ENCODE measurements at regions of chr1 and their contacts with region 1.

Region 1: GRCh38 chr1:197339106-197340060 is 71.3 kb downstream of the CRB1 start:
- DNase-seq: no peak
- H3K4me3 Mint-ChIP-seq: no peak overlapping the region
- H3K27ac Mint-ChIP-seq: no peak overlapping the region
- H3K4me1 Mint-ChIP-seq: peaks cover 7% of the 10 kb centered on the region
- H3K27me3 Mint-ChIP-seq: peaks cover 3% of the 10 kb centered on the region

Region 2: GRCh38 chr1:197146197-197146889 is 193.0 kb before region 1 on chr1 and contains the start of gene ASPM:
- intact Hi-C with region 1: no loop called
- DNase-seq: peak; percentile 98
- H3K4me3 Mint-ChIP-seq: peak within 1 kb of the TSS; percentile 96
- H3K27ac Mint-ChIP-seq: peak within 1 kb of the TSS; percentile 95
- H3K4me1 Mint-ChIP-seq: peaks cover 30% of the 10 kb centered on the region
- H3K27me3 Mint-ChIP-seq: no peaks in the 10 kb centered on the region
- total RNA-seq, gene ASPM: 29.1 TPM in 2 replicates

Region 3: GRCh38 chr1:197287863-197288262 is 51.5 kb before region 1 on chr1:
- intact Hi-C with region 1: no loop called
- DNase-seq: no peak
- H3K4me3 Mint-ChIP-seq: no peak overlapping the region
- H3K27ac Mint-ChIP-seq: no peak overlapping the region
- H3K4me1 Mint-ChIP-seq: peaks cover 1% of the 10 kb centered on the region
- H3K27me3 Mint-ChIP-seq: peaks cover 10% of the 10 kb centered on the region

Region 4: GRCh38 chr1:197391303-197392226 is 52.2 kb after region 1 on chr1:
- intact Hi-C with region 1: loop called (anchors 2 kb)
- DNase-seq: peak; percentile 66
- H3K4me3 Mint-ChIP-seq: peak overlapping the region; percentile 7
- H3K27ac Mint-ChIP-seq: peak overlapping the region; percentile 47
- H3K4me1 Mint-ChIP-seq: peaks cover 19% of the 10 kb centered on the region
- H3K27me3 Mint-ChIP-seq: peaks cover 17% of the 10 kb centered on the region

Region 5: GRCh38 chr1:197937892-197938291 is 598.5 kb after region 1 on chr1:
- intact Hi-C with region 1: no loop called
- DNase-seq: no peak
- H3K4me3 Mint-ChIP-seq: no peak overlapping the region
- H3K27ac Mint-ChIP-seq: no peak overlapping the region
- H3K4me1 Mint-ChIP-seq: peaks cover 2% of the 10 kb centered on the region
- H3K27me3 Mint-ChIP-seq: peaks cover 24% of the 10 kb centered on the region

Measured in activated CD4-positive, alpha-beta T cell treated with anti-CD3 and anti-CD28 coated beads, Interleukin-2, amount 10 ng/mL, durations not matched to agents 24 days and 14 days (primary cell).